HepG2 (cell line): ENCODE measurements at regions of chr6 and their contacts with region 1.

Region 1: DNA sequence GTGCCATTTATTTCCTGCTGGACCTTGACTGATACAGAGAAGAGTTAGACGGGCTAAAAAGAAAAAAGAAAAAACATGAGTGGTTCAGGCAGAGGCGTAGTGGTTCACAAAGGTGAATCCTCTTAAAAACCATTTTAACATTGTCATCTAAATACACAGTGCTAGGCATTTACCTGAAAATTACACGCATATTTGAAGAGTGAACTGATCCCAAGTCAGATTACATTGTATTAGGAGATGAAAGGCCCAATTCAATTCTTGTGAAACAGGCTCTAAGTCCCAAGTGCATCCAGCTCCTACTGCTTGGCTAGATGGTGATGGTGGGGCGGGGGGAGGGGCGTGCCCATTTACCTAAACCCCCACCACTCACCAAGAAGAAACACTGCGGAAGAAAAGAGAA is 46.7 kb upstream of the ATXN1 start:
- DNase-seq: peak; percentile 94
- ATAC-seq: peak; percentile 64
- H3K4me3 ChIP-seq: no peak overlapping the region
- H3K27ac ChIP-seq: peak overlapping the region; percentile 44
- H3K4me1 ChIP-seq: peaks cover 59% of the 10 kb centered on the region
- H3K27me3 ChIP-seq: no peaks in the 10 kb centered on the region
- CTCF ChIP-seq: no peak
- EP300 ChIP-seq: peak in 1 of 2 experiments; percentile 86; a peak in 1 of 4 replicates
- POLR2A ChIP-seq: no peak
- RAD21 ChIP-seq: no peak

Region 2: DNA sequence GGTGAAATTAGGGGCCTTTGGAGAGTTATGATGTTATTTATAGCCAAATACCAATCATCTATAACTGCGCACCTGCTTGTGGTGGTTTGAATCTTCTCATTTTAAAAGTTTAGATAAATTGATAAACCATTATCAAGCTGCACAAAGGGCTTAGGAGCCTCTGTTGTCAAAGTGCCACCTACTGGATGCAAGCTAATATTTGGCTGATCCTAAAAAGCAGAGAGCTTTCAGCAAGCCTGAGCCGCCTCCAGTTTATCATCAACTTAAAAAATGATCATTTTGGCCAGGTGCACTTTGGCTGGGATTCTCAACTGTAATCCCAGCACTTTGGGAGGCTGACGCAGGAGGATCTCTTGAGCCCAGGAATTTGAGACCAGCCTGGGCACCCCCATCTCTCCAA is 11.8 kb after region 1 on chr6:
- CTCF ChIA-PET with region 1: no interaction called
- POLR2A ChIA-PET with region 1: interaction called, 3 read pairs
- in situ Hi-C with region 1: no loop called
- intact Hi-C with region 1: loop called (anchors 1 kb)
- DNase-seq: no peak
- ATAC-seq: no peak
- H3K4me3 ChIP-seq: no peak overlapping the region
- H3K27ac ChIP-seq: no peak overlapping the region
- H3K4me1 ChIP-seq: peaks cover 51% of the 10 kb centered on the region
- H3K27me3 ChIP-seq: no peaks in the 10 kb centered on the region
- CTCF ChIP-seq: peak; percentile 36
- EP300 ChIP-seq: no peak
- POLR2A ChIP-seq: no peak
- RAD21 ChIP-seq: no peak